ENCODE measurements at regions of chr22 and their contacts with region 1.

Region 1: DNA sequence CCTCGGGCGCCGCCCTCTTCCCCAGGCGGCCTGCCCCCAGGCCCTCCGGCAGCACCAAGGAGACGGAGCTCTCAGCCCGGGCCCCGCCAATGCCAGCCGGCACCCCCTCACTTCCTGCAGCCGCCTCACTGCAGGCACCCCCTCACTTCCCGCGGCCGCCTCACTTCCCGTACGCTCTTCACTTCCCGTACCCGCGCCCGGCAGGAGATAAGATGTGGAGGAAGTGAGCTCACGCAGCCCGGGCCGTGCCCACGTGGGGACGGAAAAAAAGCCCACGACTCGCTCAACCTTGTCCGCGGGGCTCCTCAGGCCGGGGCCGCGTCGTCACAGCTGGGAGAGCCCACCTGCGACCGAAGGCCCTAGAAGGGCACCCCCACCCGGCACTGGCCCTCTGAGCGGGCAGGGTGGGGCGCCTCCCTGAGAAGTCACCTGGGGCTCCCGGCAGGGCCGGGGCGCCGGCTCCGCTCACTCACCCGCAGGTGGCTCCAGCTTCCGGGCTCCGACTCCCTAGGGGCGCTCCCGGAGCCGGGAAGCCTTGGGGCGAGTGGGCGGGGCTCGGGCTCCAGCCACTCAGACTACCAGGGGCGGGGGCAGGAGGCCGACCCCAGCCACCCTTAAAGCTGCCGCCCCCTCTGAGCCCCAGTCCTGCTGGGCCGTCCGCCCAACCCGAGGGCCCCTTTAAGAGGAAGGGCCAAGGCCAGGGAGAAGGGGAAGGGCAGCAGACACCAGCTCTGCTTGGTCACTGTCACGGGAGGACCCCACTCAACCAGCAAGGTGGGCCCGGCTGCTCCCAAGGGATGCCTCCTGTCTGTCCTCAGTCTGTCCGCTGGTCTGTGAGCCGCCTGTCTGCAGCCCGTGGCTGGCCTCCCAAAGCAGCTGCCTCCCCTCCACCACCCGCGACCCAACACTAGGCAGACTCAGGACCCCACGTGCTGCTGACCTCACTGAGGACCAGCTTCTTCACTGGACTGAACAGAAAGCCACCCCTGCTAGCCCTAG is 31.4 kb downstream of the PISD start:
- DNase-seq: peak; percentile 93
- ATAC-seq: peak; percentile 89 to 92
- H3K4me3 ChIP-seq: peak overlapping the region; percentile 75
- H3K27ac ChIP-seq: peak overlapping the region; percentile 97
- H3K4me1 ChIP-seq: peaks cover 49% of the 10 kb centered on the region
- H3K27me3 ChIP-seq: no peaks in the 10 kb centered on the region
- CTCF ChIP-seq: no peak

Region 2: GRCh38 chr22:31556627-31557203 is 73.9 kb before region 1 on chr22:
- intact Hi-C with region 1: loop called (anchors 10 kb)
- DNase-seq: no peak
- ATAC-seq: peak; percentile 25 to 54
- H3K4me3 ChIP-seq: no peak overlapping the region
- H3K27ac ChIP-seq: no peak overlapping the region
- H3K4me1 ChIP-seq: peaks cover 4% of the 10 kb centered on the region
- H3K27me3 ChIP-seq: no peaks in the 10 kb centered on the region
- CTCF ChIP-seq: peak; percentile 53

Region 3: GRCh38 chr22:31692186-31692886 is 61.7 kb after region 1 on chr22:
- intact Hi-C with region 1: no loop called
- DNase-seq: no peak
- ATAC-seq: no peak
- H3K4me3 ChIP-seq: no peak overlapping the region
- H3K27ac ChIP-seq: no peak overlapping the region
- H3K4me1 ChIP-seq: no peaks in the 10 kb centered on the region
- H3K27me3 ChIP-seq: no peaks in the 10 kb centered on the region
- CTCF ChIP-seq: no peak

Measured in lower lobe of right lung (tissue), 2 donors.